ENCODE measurements at regions of chr11 and their contacts with region 1.

Region 1: GRCh38 chr11:113532697-113533424 is 57.7 kb upstream of the DRD2 start:
- DNase-seq: peak; percentile 75
- H3K4me3 ChIP-seq: no peak overlapping the region
- H3K27ac ChIP-seq: no peak overlapping the region
- H3K4me1 ChIP-seq: no peaks in the 10 kb centered on the region
- H3K27me3 ChIP-seq: no peaks in the 10 kb centered on the region
- CTCF ChIP-seq: peak; percentile 77

Region 2: GRCh38 chr11:113305440-113306336 is 227.2 kb before region 1 on chr11:
- intact Hi-C with region 1: loop called (anchors 2 kb)
- DNase-seq: peak; percentile 75
- H3K4me3 ChIP-seq: no peak overlapping the region
- H3K27ac ChIP-seq: no peak overlapping the region
- H3K4me1 ChIP-seq: no peaks in the 10 kb centered on the region
- H3K27me3 ChIP-seq: no peaks in the 10 kb centered on the region
- CTCF ChIP-seq: peak; percentile 91

Region 3: DNA sequence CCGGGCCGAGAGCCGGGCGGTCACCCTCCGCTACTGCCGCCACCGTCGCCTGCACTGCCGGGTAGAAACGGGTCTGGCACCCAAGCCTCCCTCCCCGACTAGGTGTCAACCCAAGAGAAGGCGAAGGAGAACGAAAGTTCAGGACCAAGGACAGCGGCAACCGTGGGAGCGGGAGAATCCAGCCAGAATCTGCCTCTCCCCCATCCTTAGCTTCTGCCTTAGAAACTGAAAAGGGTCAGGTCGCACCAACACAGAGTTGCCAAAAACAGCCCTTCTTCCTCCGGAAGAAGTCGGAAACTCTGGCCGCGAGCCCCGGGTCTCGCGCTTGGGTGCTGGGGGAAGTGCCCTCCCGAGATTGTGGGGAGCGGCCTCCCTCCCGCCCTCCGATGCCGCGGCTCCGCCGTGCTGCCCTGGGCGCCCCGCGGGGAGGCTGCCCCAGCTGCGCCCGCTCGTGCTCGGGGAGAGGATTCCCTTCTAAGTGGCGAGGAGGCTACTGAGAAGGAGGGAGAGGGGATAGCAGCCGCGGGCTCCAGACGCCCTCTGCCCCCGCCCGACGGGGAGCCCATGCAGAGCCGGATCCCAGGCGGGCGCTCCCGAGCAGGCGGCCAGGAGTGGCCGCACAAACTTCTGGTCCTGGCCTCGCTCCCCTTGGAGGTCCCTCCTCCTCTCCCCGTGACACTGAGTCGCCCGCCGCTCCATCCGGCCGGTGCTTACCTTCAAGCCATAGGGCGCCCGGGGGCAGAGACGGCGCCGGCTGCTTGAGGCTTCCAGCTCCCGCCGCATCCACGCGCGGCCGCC is 58.3 kb before region 1 on chr11:
- intact Hi-C with region 1: no loop called
- DNase-seq: peak; percentile 79
- H3K4me3 ChIP-seq: no peak overlapping the region
- H3K27ac ChIP-seq: no peak overlapping the region
- H3K4me1 ChIP-seq: no peaks in the 10 kb centered on the region
- H3K27me3 ChIP-seq: peaks cover 27% of the 10 kb centered on the region
- CTCF ChIP-seq: no peak

Region 4: DNA sequence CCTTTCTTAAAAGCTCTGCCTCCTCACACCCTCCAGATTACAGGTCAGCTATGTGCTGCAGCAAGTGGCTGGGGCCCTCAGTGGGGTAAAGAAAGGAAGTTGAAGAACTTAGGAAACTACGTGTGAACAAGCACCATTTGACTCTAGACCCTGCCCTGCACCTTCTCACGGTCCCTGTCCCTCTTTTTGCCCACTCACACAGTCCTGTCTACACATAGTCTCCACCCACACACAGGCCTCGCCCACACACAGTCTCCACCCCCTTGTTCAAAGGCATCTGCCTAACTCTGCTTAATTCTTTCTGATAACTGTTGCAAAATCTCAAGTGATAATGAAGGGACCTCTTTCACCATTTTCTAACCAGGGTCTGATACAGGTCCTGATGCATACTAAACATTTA is 114.2 kb after region 1 on chr11:
- intact Hi-C with region 1: no loop called
- DNase-seq: no peak
- H3K4me3 ChIP-seq: no peak overlapping the region
- H3K27ac ChIP-seq: no peak overlapping the region
- H3K4me1 ChIP-seq: no peaks in the 10 kb centered on the region
- H3K27me3 ChIP-seq: no peaks in the 10 kb centered on the region
- CTCF ChIP-seq: no peak

Measured in colonic mucosa (tissue), 4 donors.